ENCODE measurements at regions of chr11 and their contacts with region 1.

Region 1: DNA sequence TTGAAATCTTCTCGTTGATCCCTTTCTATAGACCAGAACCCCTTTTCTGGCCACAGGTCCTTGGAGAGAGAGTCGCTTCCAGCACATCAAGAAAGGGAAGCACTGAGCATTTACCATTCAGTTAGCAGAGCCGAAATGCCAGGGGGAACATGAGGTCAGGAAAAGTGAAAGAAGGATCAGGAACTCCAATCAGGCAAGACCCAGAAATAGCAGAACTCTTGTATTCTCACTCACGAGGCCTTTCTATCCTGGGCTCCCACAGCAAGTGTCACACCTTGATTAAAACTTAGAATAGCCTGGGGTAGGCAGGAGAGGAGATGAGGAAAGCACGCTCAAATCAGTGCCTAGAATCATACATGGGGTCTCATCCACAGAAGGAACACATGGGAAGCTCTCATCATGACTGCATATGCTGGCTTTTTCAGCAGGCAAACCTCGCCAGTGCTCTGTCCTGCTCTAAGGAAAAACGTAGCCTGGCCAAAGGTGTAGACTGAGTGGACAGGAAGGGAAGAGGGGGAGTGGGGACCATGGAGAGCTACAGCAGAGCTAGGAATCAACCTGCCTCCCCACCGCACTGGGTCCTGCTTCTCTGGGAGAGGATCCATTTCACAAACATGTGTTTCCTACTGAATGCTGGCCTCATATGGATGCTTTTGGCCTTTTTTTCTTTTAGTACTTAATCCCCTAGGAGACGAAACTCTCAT is 40.5 kb downstream of the OPCML start:
- DNase-seq: no peak
- ATAC-seq: peak in 2 of 8 donors; percentile 24 to 74
- H3K4me3 ChIP-seq: no peak overlapping the region
- H3K27ac ChIP-seq: no peak overlapping the region
- H3K4me1 ChIP-seq: peaks cover 0 to 12% (median 5%) of the 10 kb centered on the region in 9 donors
- H3K27me3 ChIP-seq: peaks cover 0 to 9% (median 0%) of the 10 kb centered on the region in 7 donors
- CTCF ChIP-seq: no peak

Region 2: GRCh38 chr11:133413703-133414102 is 78.1 kb before region 1 on chr11:
- intact Hi-C with region 1: loop called in 1 of 10 experiments (anchors 2 kb)
- DNase-seq: no peak
- ATAC-seq: no peak
- H3K4me3 ChIP-seq: no peak overlapping the region
- H3K27ac ChIP-seq: no peak overlapping the region
- H3K4me1 ChIP-seq: no peaks in the 10 kb centered on the region
- H3K27me3 ChIP-seq: no peaks in the 10 kb centered on the region
- CTCF ChIP-seq: no peak

Measured in heart right ventricle (tissue), 16 donors.